ENCODE measurements at regions of chr7 and their contacts with region 1.

Region 1: GRCh38 chr7:5854738-5855137 is 25.9 kb upstream of the OCM start:
- DNase-seq: no peak
- ATAC-seq: no peak
- H3K4me3 Mint-ChIP-seq: no peak overlapping the region
- H3K27ac Mint-ChIP-seq: no peak overlapping the region
- H3K4me1 Mint-ChIP-seq: peaks cover 21% of the 10 kb centered on the region
- H3K27me3 Mint-ChIP-seq: no peaks in the 10 kb centered on the region

Region 2: GRCh38 chr7:6323967-6324701 is 469.4 kb after region 1 on chr7:
- CTCF ChIA-PET with region 1: interaction called, 15 read pairs
- DNase-seq: no peak
- ATAC-seq: no peak
- H3K4me3 Mint-ChIP-seq: no peak overlapping the region
- H3K27ac Mint-ChIP-seq: no peak overlapping the region
- H3K4me1 Mint-ChIP-seq: no peaks in the 10 kb centered on the region
- H3K27me3 Mint-ChIP-seq: no peaks in the 10 kb centered on the region

Measured in activated CD8-positive, alpha-beta memory T cell treated with anti-CD3 and anti-CD28 coated beads, Interleukin-2, amount 10 ng/mL, durations not matched to agents 7 days and 5 days (primary cell).